SK-N-SH (cell line): ENCODE measurements at regions of chr12 and their contacts with region 1.

Region 1: GRCh38 chr12:27940756-27941402 is 31.7 kb downstream of the PTHLH start:
- DNase-seq: peak; percentile 69
- H3K4me3 ChIP-seq: peak overlapping the region in 1 of 2 experiments; percentile 11; a peak in 1 of 4 replicates
- H3K27ac ChIP-seq: no peak overlapping the region
- H3K4me1 ChIP-seq: no peaks in the 10 kb centered on the region
- H3K27me3 ChIP-seq: no peaks in the 10 kb centered on the region
- CTCF ChIP-seq: peak; percentile 94
- EP300 ChIP-seq: no peak
- RAD21 ChIP-seq: peak; percentile 74

Region 2: DNA sequence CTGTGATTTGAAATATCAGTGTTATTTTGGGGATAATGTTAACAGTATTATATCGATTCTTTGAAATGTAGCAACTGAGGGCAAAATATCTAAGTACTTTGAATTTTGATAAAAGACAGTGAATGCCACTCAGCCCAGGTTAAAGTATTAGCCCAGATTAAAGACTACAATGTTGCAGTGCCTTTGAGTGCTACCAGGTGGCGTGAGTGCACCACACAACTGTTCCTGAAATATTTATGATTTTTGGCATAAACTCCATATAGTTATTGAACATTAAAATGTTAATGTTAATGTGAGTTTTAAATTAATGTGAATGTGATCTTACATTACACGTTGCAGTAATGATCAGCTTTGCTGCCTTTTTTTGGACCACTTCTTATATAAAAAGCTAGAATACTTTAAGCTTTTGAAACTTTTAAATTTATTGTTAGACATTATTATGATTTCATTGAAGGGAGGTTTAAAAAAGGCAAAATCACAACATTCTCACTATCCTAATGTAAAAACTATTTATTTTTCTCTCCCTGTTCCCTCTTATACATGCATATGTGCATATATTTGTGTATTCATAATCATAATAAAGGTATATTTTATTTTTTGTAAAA is 207.7 kb before region 1 on chr12:
- CTCF ChIA-PET with region 1: interaction called, 50 read pairs
- POLR2A ChIA-PET with region 1: no interaction called
- DNase-seq: peak; percentile 55
- H3K4me3 ChIP-seq: no peak overlapping the region; a peak in 1 of 4 replicates
- H3K27ac ChIP-seq: no peak overlapping the region
- H3K4me1 ChIP-seq: peaks cover 0 to 7% of the 10 kb centered on the region in 2 experiments; a peak in 2 of 4 replicates
- H3K27me3 ChIP-seq: no peaks in the 10 kb centered on the region
- CTCF ChIP-seq: peak; percentile 97
- EP300 ChIP-seq: no peak
- RAD21 ChIP-seq: peak; percentile 95

Region 3: GRCh38 chr12:27762757-27763156 is 178.1 kb before region 1 on chr12:
- CTCF ChIA-PET with region 1: no interaction called
- POLR2A ChIA-PET with region 1: no interaction called
- DNase-seq: no peak
- H3K4me3 ChIP-seq: no peak overlapping the region
- H3K27ac ChIP-seq: no peak overlapping the region
- H3K4me1 ChIP-seq: no peaks in the 10 kb centered on the region
- H3K27me3 ChIP-seq: no peaks in the 10 kb centered on the region
- CTCF ChIP-seq: no peak
- EP300 ChIP-seq: no peak
- RAD21 ChIP-seq: no peak

Region 4: DNA sequence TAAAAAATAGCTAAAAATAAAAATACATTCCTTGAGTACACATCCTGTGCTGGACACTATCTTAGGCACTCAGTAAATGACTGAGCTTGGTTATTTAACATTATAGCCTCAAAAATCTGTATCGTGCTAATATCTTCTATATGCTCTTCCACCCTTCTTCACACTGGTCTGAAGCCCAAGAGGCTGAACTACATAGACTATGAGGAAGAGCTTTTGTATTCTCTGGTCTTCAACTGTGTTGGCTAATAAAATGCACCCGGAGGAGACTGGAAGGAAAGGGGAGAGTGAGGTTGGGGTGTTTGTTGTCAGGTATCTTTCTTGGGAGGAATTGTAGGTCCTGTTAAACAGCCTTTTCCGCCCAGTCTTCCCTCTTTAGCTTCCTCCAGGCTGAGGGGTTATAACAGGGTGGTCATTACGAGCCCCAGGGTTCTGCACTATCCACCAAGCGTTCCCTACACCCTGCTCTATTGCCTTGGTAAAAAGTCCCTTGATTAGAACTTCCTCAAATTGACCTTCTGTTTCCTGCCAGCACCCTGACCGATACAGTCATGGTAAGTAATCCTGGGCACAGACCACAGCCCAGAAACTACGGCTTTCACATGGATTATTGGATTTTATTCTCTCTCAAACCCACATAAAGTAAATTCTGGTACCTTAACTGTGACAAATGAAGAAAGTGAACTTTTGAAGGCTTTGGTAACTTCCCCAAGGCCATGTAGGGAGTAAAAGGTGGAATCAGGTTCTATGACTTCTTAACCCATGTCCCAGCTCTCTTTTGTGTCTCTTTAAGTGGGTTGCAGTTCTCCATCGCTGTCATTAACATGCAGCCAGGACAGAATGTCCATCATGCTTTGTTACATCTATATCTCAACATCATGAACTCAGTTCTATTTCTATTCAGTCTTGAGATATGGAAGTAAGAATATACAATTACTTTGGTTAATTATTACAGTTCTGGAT is 39.7 kb before region 1 on chr12:
- CTCF ChIA-PET with region 1: no interaction called
- POLR2A ChIA-PET with region 1: no interaction called
- DNase-seq: no peak
- H3K4me3 ChIP-seq: no peak overlapping the region
- H3K27ac ChIP-seq: no peak overlapping the region
- H3K4me1 ChIP-seq: peaks cover 0 to 5% of the 10 kb centered on the region in 2 experiments; a peak in 1 of 4 replicates
- H3K27me3 ChIP-seq: no peaks in the 10 kb centered on the region
- CTCF ChIP-seq: no peak
- EP300 ChIP-seq: no peak
- RAD21 ChIP-seq: no peak

Region 5: DNA sequence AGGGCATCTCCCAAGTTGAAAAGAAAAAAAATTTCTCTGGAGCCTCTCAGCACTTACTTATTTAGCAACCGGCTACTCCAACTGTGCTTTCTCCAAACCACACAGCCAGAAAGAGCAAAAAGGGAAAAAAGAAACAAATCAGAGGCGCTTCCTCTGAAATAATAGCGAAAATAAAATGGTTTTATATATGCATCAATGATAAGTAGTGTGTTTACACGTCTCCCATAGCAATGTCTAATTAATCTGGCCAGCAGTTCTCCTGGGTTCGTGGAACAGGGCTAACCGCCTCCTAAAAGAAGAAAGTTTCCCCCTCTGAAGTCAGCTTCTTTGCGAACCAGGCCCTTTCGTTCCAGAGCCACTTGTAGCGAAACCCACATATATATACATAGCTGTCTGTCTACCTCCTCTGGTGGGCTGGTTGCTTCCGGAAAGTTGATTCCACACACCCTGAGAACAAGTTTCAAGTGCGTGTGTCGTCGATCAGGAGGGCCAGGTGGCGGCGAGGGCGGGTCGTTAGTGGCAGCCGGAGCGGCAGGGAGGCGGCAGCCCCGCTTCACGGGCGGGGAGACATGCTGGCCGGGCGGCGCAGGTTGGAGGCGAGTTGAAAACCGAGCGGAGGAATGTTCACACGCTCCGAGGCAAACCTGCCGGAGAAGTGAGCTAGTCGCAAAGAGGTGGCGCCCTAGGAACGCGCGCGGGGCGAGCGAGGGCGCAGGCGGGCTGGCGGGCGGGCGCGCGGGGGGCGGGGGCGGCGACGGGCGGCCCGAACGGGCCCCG is 28.9 kb after region 1 on chr12:
- CTCF ChIA-PET with region 1: interaction called, 11 read pairs
- POLR2A ChIA-PET with region 1: no interaction called
- DNase-seq: no peak
- H3K4me3 ChIP-seq: peak overlapping the region; percentile 57 to 77
- H3K27ac ChIP-seq: peak overlapping the region in 1 of 2 experiments; percentile 98; a peak in 2 of 4 replicates
- H3K4me1 ChIP-seq: peaks cover 14 to 30% of the 10 kb centered on the region in 2 experiments; a peak in 3 of 4 replicates
- H3K27me3 ChIP-seq: no peaks in the 10 kb centered on the region
- CTCF ChIP-seq: peak; percentile 35
- EP300 ChIP-seq: no peak
- RAD21 ChIP-seq: peak; percentile 57

Region 6: GRCh38 chr12:28158353-28158752 is 217.5 kb after region 1 on chr12:
- CTCF ChIA-PET with region 1: no interaction called
- POLR2A ChIA-PET with region 1: no interaction called
- DNase-seq: no peak
- H3K4me3 ChIP-seq: no peak overlapping the region
- H3K27ac ChIP-seq: no peak overlapping the region
- H3K4me1 ChIP-seq: no peaks in the 10 kb centered on the region; a peak in 1 of 4 replicates
- H3K27me3 ChIP-seq: no peaks in the 10 kb centered on the region
- CTCF ChIP-seq: no peak
- EP300 ChIP-seq: no peak
- RAD21 ChIP-seq: no peak